ENCODE measurements at regions of chr7 and their contacts with region 1.

Region 1: DNA sequence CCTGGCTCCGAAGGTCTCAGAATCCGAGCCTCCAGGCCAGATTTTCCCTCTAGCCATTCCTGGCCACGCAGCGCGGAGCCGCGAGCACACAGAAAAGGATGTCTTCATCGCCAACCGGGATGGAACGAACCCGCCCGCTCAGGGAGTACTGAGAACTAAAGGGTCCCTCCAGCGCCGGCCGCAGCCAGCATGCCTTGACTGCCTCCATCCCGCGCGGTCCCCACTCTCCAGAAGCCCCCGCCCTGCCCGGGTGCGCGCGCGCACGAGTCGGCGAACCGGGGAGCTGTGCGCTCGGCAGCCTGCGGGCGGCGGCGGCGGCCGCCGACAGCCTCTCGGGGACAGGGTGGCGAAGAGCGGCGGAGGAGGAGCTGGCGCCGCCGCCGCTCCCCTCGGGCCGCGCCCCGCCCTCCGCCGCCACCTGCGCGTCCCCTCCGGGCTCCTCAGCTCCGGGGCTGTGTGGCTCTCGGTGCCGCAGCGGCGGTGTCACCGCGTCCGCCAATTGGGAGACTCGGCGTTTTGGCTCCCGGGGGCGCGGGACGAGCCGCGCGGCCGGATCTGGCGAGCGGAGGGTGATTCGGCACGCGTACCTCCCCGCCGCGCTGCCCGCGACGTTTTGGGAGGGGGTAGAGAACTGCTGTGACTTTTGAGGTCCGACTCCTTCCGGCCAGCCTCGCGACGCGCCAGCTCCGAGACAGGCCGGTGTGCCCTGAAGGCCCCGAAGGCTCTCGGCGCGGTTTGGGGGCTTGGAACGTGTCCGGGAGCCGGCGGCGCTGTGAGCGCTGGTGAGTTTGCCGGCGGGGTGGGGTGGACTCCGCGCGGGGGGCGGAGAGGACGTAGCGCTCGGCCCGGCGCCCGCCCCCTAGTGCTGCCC is 453 bp upstream of the GALNT17 start:
- DNase-seq: peak in 1 of 2 donors; percentile 76
- H3K4me3 ChIP-seq: peak overlapping the region; percentile 77 to 81
- H3K27ac ChIP-seq: peak overlapping the region; percentile 46 to 73
- H3K4me1 ChIP-seq: peaks cover 0 to 3% of the 10 kb centered on the region in 2 donors
- H3K27me3 ChIP-seq: no peaks in the 10 kb centered on the region
- CTCF ChIP-seq: peak in 2 of 3 experiments; percentile 23 to 36

Region 2: DNA sequence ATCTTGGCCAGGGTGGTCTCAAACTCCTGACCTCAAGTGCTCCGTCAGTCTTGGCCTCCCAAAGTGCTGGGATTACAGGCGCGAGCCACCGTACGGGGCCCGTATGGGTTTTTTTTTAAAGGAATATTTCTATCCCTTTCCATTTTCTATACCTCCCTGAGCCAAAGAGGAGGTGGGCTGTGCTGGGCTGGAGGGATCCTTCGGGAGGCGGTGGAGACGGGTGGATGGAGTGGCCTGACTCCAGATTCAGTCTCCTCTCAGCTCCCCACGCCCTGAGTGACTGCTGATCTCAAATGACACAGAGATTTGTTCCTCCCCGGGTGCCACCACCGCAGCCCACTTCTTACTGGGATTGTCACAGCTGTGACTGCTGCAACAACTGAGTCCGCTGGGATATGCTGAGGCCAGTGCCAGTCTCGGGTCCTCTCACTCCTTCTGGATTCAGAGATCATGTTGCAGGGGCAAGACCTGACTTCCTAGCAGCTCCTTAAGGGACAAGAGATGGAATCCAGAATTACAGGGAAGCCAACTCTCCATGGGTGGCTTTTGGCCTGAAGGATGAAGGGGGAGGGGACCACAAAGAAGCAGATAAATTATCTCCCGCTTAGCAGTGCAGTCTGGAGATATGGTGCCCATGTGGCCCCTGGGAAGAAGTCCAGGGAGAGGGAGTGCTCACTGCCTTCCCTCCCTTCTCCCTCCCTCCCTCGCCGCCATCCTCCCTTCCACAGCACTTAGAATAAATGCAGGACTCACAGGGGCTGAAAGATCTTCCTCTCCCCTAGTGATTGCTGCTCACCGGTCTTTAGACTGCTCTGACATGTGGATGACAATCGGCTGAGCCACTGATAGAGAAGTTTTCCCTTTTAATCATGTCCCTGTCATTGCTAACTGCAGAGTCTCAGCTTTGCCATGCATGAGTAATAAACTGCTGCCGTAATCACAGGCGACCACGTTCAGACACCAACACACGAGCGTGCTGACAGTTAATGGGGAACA is 14.7 kb after region 1 on chr7:
- intact Hi-C with region 1: no loop called
- DNase-seq: no peak
- H3K4me3 ChIP-seq: no peak overlapping the region
- H3K27ac ChIP-seq: no peak overlapping the region
- H3K4me1 ChIP-seq: no peaks in the 10 kb centered on the region
- H3K27me3 ChIP-seq: no peaks in the 10 kb centered on the region
- CTCF ChIP-seq: no peak

Region 3: DNA sequence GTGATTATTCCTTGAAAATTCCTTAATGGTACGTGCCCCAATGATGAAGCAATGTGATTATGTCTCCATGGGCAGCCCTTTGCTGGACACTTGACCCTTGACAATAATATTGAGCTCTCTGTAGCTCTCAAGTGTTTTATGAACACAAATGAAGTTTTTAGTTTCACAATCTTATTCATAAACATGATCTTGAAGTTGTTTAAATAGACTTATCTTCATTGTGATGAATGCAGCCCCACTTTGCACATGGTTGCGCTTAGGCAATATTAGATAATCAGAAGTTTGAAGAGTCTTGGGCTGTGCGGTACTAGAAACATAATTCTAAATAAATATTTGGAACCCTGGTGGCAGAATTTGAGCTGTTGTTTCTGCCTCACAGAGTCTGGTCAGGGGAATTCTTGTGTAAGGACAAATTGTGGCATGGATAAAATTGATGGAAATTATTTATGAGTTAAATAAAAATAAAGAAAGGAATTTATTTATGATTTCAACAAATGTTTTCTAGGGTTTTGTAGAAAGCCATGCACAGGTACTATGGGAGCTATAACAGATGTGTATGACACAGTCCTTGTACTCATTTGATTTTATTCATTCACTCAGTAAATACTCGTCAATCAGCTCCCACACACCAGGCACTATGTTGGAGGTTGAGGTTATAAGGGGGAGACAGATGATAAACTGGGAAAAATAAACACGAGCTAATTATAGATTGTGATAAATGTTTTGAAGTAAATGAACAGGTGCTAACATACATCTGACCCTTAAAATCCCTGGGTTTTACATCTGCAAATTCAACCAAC is 218.4 kb after region 1 on chr7:
- intact Hi-C with region 1: loop called (anchors 10 kb)
- DNase-seq: no peak
- H3K4me3 ChIP-seq: no peak overlapping the region
- H3K27ac ChIP-seq: no peak overlapping the region
- H3K4me1 ChIP-seq: no peaks in the 10 kb centered on the region
- H3K27me3 ChIP-seq: no peaks in the 10 kb centered on the region
- CTCF ChIP-seq: no peak

Region 4: DNA sequence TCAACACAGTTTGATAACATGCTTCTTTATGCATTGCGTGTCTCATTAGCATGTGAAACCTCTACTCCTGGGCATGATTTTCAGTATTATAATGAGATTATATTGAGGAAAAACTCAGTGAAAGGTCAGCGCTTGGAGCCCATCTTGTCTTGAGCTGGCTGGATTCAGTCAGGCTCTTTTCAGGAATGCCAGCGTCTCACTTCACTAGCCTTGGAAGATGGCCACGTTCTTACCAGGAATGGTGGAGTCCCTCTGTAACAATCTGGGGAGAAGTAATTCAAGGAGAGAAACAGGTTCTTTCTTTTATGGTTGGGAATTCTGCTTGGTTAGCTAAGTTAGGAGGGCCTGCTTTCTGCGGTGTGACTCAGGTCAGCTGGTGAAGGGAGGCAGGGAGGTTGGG is 241.5 kb after region 1 on chr7:
- intact Hi-C with region 1: loop called (anchors 5 kb)
- DNase-seq: no peak
- H3K4me3 ChIP-seq: no peak overlapping the region
- H3K27ac ChIP-seq: no peak overlapping the region
- H3K4me1 ChIP-seq: no peaks in the 10 kb centered on the region
- H3K27me3 ChIP-seq: no peaks in the 10 kb centered on the region
- CTCF ChIP-seq: no peak